AG04449 (cell line): ENCODE measurements at regions of chr7 and their contacts with region 1.

Region 1: DNA sequence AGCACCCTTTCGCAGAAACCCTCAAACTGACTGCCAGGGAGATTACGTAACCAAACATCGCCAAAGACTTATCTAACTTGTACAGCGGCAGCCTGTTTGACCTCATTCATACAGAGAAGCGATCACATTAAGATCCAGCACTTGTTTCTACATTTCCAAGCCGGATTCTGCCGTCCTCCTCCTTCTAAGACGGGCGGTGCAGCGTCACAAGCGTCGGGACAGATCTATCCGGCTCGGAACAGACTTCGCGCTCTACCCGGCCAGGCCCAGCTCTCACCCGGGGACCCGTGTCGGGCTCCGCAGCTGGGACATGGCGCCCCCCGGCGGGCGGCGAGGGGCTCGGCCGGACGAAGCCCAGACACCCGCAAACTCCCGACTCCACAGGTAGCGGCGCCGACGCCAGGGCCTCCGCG is 373 bp downstream of the H2AZ2 start:
- DNase-seq: no peak
- H3K4me3 ChIP-seq: peak overlapping the region; percentile 74
- CTCF ChIP-seq: peak; percentile 95

Region 2: DNA sequence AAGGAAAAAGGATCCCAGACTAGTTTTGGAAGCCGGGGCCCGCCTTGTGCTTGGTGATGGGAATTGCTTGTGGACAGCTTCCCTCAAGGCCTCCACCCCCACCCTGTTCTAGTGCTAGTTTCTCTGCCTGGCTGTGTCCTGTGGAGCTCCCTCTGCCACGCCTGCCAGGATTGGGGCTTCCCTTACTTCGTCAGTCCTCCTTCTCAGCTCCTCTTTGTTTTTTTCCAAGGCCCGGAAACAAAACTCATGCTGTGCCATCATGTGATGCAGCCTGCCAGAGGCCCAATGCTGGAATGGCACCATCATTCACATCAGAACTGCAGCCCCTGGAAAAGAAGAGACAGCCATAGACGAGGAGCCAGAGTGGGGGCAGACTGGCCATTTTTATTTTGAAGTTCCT is 635.5 kb before region 1 on chr7:
- CTCF ChIA-PET with region 1: no interaction called
- POLR2A ChIA-PET with region 1: no interaction called
- DNase-seq: no peak
- H3K4me3 ChIP-seq: no peak overlapping the region
- CTCF ChIP-seq: no peak

Region 3: GRCh38 chr7:44587843-44588711 is 259.4 kb before region 1 on chr7:
- CTCF ChIA-PET with region 1: interaction called, 35 read pairs
- POLR2A ChIA-PET with region 1: no interaction called
- DNase-seq: no peak
- H3K4me3 ChIP-seq: no peak overlapping the region
- CTCF ChIP-seq: peak; percentile 50

Region 4: GRCh38 chr7:44824894-44825526 is 22.5 kb before region 1 on chr7:
- CTCF ChIA-PET with region 1: interaction called, 11 read pairs
- POLR2A ChIA-PET with region 1: no interaction called
- DNase-seq: no peak
- H3K4me3 ChIP-seq: no peak overlapping the region
- CTCF ChIP-seq: no peak

Region 5: DNA sequence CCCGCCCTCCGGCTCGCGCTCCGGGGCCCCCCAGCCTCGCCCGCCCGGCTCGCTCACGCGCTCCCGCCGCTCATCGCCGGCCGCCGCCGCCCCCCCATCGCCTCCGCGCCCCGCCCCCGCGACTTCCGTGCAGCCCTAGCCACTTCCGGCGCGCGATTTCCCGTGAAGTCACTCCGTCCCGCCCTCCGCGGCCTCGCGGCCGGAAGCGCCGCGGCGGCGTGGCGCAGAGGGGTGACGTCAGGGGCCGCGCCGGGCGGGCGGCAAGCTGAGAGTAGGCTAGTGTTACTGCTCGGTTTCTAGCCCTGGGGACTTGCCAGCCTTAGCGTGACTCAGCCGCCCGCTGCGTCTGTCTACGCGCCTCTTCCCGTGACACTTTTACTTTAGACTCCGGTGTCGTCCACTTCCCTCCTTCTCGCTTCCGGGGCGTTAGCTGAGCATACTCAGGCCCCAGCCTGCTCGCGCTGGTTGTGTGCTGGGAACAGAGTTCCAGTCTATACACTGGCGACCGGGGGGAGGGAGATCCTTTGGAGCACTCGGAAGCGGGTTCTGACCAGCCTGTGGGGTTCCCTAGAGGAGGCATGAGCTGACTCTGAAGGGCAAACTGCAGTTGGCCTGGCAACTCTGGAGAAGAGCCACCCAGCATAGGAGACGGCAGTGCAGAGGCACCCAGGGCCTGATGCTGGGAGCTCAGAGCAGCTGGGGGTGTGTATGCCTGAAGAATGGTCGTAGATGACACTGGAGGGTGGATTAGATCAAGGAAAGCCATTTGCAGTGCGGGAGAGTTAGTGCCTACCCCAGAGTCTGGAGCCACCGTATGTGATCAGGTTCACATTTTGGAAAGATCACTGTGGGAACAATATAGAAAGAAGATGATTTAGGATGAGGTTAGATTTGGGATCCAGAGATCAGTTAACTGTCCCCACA is 38.1 kb after region 1 on chr7 and contains the start of gene PURB:
- CTCF ChIA-PET with region 1: interaction called, 10 read pairs
- POLR2A ChIA-PET with region 1: interaction called, 5 read pairs
- DNase-seq: peak; percentile 79
- H3K4me3 ChIP-seq: peak within 1 kb of the TSS; percentile 87
- CTCF ChIP-seq: no peak